ENCODE measurements at regions of chr12 and their contacts with region 1.

Region 1: DNA sequence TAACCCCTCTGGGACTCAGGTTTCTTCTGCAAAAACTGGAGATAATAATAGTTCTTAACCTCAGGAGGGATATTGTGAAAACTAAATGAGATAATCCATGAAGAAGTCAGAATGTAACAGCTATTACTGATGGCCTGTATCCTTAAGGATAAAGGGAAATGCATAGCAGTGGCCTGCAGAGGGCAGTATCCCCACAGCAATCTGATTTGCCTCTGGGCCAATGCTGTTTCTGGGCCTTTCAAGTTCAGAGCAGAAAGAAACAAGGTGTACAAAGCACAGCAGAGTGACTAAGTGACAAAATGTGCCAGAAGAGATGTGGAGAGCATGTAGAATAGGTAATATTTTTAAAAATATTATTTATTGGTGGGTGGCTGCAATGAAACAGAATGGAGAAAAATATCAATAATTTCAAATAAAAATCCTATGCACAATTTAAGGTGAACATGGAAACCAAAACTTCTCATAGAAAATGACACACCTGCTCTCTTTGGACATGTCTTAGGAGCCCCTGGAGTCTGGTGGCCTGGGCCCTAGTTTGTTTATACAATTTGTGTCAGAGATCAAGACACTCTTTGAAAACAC is 90.3 kb downstream of the C12orf75 start:
- H3K4me3 Mint-ChIP-seq: no peak overlapping the region
- H3K27ac Mint-ChIP-seq: no peak overlapping the region
- H3K4me1 Mint-ChIP-seq: no peaks in the 10 kb centered on the region
- H3K27me3 Mint-ChIP-seq: peaks cover 23% of the 10 kb centered on the region

Region 2: GRCh38 chr12:106136263-106136662 is 715.5 kb after region 1 on chr12:
- intact Hi-C with region 1: loop called (anchors 1 kb)
- H3K4me3 Mint-ChIP-seq: no peak overlapping the region
- H3K27ac Mint-ChIP-seq: no peak overlapping the region
- H3K4me1 Mint-ChIP-seq: no peaks in the 10 kb centered on the region
- H3K27me3 Mint-ChIP-seq: peaks cover 68% of the 10 kb centered on the region

Region 3: GRCh38 chr12:106223485-106224354 is 803.0 kb after region 1 on chr12:
- intact Hi-C with region 1: loop called (anchors 1 kb)
- H3K4me3 Mint-ChIP-seq: no peak overlapping the region
- H3K27ac Mint-ChIP-seq: no peak overlapping the region
- H3K4me1 Mint-ChIP-seq: peaks cover 23% of the 10 kb centered on the region
- H3K27me3 Mint-ChIP-seq: peaks cover 20% of the 10 kb centered on the region

Measured in dendritic cell treated with granulocyte-macrophage colony-stimulating factor and Interleukin-4, amounts not matched to agents 40 ng/mL and 50 ng/mL, for 4 days (primary cell).